ENCODE measurements at regions of chr7 and their contacts with region 1.

Region 1: DNA sequence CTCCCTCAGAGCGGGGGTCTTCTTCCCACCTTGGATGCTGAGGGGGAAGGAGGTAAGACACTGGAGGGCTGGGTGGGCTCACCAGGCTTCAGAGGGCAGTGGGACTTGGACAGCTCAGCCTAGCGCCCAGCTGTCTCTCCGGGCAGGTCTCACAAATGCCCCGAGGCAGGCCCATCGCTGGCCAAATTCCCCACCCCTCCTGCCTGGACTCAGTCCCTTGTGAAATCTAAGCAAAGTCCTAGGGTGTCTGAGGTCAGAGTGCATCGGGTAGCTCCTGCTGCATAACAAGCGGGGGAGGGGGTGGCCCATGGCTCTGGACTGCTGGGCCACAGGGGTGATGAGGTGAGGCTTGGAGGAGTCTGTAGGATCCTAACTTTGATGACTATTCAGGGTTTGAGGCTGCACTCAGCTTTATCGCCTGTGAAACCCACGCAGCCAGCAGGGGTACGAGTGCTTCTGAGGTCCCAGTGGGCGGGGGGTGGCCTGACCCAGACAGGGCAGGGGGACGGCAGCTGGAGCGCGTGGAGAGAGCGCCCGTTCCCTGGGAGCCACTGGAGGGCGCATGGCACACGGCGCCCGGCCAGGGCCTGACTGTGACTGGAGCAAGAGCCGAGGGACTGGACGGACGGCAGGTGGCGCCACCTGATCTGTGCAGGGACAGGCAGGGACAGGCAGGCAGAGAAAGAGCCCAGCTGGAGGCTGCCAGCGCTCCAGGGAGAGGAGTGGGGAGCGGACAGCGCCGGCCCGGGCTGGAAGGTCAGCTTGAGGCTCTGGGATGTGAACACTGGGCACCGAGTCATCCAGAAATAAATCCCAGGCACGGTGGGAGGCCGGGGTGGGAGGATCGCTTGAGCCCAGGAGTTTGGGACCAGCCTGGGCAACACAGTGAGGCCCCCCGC is 10.0 kb downstream of the CYP2W1 start:
- DNase-seq: peak in 1 of 2 donors; percentile 94
- H3K4me3 ChIP-seq: no peak overlapping the region
- H3K27ac ChIP-seq: no peak overlapping the region
- H3K4me1 ChIP-seq: peaks cover 21% of the 10 kb centered on the region
- H3K27me3 ChIP-seq: no peaks in the 10 kb centered on the region
- CTCF ChIP-seq: peak; percentile 99 to 100 (median 100)
- POLR2A ChIP-seq: no peak

Region 2: DNA sequence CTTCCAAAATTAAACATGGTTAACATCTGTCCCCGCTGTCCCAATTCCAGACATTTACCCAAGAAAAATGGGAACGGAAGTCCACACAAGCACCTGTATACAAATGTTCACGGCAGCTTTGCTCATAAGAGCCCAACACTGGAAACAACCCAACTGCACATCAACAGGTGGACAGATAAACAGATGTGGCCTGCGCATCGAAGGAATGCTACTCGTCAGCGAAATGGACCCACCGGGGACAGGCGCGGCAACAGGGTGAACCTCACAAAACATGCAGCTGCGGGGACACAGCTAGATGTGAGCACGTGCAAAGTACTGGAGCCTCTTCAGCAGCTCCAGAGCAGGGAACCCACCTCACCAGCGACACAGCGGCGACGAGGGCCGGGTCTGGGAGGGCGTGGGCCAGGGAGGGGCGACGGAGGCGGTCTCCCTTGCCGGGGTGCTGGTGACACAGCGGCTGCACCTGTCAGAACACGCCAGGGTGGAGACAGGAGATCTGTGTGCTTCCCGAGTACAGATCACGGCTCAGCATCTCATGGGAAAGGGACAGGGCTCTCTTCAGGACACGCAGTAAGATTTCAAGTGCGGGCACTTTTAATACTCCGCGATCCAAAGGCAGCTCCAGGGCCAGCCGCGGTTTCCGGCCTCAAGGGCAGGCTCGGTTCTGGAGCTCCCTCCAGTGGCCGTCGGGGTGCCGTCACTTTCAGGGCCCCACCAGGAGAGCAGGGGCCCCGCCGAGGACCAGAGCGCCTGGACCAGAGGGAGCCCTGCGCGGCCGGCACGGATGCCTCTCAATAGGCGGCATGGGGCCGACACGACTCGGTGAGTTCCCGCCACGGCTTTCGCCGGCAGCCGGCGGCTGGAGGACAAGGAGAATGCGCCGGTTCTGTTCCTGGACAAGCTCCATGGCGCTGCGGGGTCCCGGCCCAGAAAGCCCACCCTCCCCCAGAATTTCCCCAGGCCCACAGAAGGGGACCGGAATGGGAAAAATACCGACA is 72.6 kb after region 1 on chr7:
- intact Hi-C with region 1: loop called (anchors 2 kb)
- DNase-seq: no peak
- H3K4me3 ChIP-seq: peak overlapping the region in 1 of 2 donors; percentile 28
- H3K27ac ChIP-seq: no peak overlapping the region
- H3K4me1 ChIP-seq: peaks cover 48% of the 10 kb centered on the region
- H3K27me3 ChIP-seq: no peaks in the 10 kb centered on the region
- CTCF ChIP-seq: peak; percentile 91 to 99 (median 97)
- POLR2A ChIP-seq: no peak

Region 3: GRCh38 chr7:1159891-1160668 is 167.1 kb after region 1 on chr7 and contains the start of gene ZFAND2A:
- intact Hi-C with region 1: loop called (anchors 10 kb)
- DNase-seq: peak in 1 of 2 donors; percentile 98
- H3K4me3 ChIP-seq: peak within 1 kb of the TSS; percentile 60 to 85
- H3K27ac ChIP-seq: peak within 1 kb of the TSS; percentile 99
- H3K4me1 ChIP-seq: peaks cover 30% of the 10 kb centered on the region
- H3K27me3 ChIP-seq: no peaks in the 10 kb centered on the region
- CTCF ChIP-seq: peak in 1 of 3 experiments; percentile 33
- POLR2A ChIP-seq: peak; percentile 82 to 83
- total RNA-seq, gene ZFAND2A: 30.9 TPM

Measured in vagina (tissue), 2 donors.